ENCODE measurements at regions of chr16 and their contacts with region 1.

Region 1: GRCh38 chr16:48609652-48610029 is 339 bp downstream of the N4BP1 start:
- DNase-seq: peak; percentile 61
- H3K4me3 ChIP-seq: peak overlapping the region; percentile 72 to 98 (median 96)
- H3K27ac ChIP-seq: peak overlapping the region; percentile 95 to 97 (median 96)
- H3K4me1 ChIP-seq: peaks cover 28 to 76% (median 59%) of the 10 kb centered on the region in 4 donors
- H3K27me3 ChIP-seq: no peaks in the 10 kb centered on the region
- CTCF ChIP-seq: no peak
- EP300 ChIP-seq: no peak
- POLR2A ChIP-seq: peak; percentile 4

Region 2: DNA sequence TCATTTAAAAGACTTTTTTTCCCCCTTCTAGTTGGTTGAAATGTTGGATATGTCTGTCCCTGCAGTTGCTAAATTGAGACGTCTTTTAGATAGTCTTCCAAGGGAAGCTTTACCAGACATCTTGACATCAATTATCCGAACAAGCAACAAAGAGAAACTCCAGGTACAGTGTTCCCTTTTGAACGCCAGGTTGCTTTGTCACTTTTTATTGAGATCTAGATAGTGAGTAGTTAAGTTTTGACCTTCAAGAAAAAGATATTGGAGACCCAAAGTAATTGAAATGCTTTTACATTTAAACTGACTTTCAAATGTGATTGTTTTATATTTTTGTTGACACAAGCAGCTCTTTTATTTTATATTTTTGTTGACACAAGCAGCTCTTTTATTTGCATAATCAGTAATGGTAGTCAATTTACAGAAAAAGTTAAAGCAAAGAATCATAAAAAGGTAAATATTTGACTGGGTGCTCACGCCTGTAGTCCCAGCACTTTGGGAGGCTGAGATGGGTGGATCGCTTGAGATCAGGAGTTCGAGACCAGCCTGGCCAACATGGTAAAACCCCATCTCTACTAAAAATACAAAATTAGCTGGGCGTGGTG is 353.0 kb before region 1 on chr16:
- in situ Hi-C with region 1: no loop called
- intact Hi-C with region 1: no loop called
- DNase-seq: no peak
- H3K4me3 ChIP-seq: no peak overlapping the region
- H3K27ac ChIP-seq: peak overlapping the region in 1 of 4 donors; percentile 28
- H3K4me1 ChIP-seq: peaks cover 0 to 10% (median 0%) of the 10 kb centered on the region in 4 donors
- H3K27me3 ChIP-seq: no peaks in the 10 kb centered on the region
- CTCF ChIP-seq: peak in 1 of 5 experiments; percentile 20
- EP300 ChIP-seq: no peak
- POLR2A ChIP-seq: no peak

Region 3: DNA sequence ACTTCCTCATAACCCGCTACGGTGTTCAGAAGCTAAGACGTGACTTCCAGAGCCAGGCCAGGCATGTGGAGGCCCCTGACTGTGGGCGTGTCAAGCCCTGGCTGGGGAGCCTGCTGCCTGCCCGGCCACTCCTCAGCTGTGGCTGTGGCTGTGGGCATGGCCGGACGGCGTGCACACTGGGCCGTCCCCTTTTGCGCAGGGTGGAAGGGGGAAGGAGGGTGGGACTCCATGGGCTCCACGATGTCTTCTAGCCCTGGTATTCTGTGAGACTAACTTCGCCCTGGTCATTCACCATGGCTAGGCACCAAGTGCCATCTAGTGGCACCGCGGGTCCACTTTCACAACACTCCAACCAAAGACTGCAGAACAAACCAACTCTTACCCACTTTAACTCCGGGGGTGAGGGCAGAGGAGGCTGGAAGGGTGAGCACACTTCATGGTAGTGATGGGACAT is 67.6 kb before region 1 on chr16:
- in situ Hi-C with region 1: loop called in 1 of 4 experiments (anchors 10 kb)
- intact Hi-C with region 1: no loop called
- DNase-seq: peak; percentile 48
- H3K4me3 ChIP-seq: no peak overlapping the region
- H3K27ac ChIP-seq: no peak overlapping the region
- H3K4me1 ChIP-seq: peaks cover 10 to 36% (median 17%) of the 10 kb centered on the region in 4 donors
- H3K27me3 ChIP-seq: no peaks in the 10 kb centered on the region
- CTCF ChIP-seq: peak; percentile 35 to 52 (median 49)
- EP300 ChIP-seq: no peak
- POLR2A ChIP-seq: no peak

Region 4: GRCh38 chr16:48556913-48557351 is 52.7 kb before region 1 on chr16:
- in situ Hi-C with region 1: no loop called
- intact Hi-C with region 1: loop called (anchors 10 kb)
- DNase-seq: no peak
- H3K4me3 ChIP-seq: no peak overlapping the region
- H3K27ac ChIP-seq: no peak overlapping the region
- H3K4me1 ChIP-seq: peaks cover 8 to 71% (median 29%) of the 10 kb centered on the region in 4 donors
- H3K27me3 ChIP-seq: no peaks in the 10 kb centered on the region
- CTCF ChIP-seq: no peak
- EP300 ChIP-seq: no peak
- POLR2A ChIP-seq: no peak

Region 5: GRCh38 chr16:48790151-48790550 is 180.5 kb after region 1 on chr16:
- in situ Hi-C with region 1: no loop called
- intact Hi-C with region 1: no loop called
- DNase-seq: no peak
- H3K4me3 ChIP-seq: no peak overlapping the region
- H3K27ac ChIP-seq: no peak overlapping the region
- H3K4me1 ChIP-seq: no peaks in the 10 kb centered on the region
- H3K27me3 ChIP-seq: no peaks in the 10 kb centered on the region
- CTCF ChIP-seq: no peak
- EP300 ChIP-seq: no peak
- POLR2A ChIP-seq: no peak

Measured in transverse colon (tissue), 4 donors.